Ascending aorta (tissue), 2 donors: ENCODE measurements at regions of chr11 and their contacts with region 1.

Region 1: GRCh38 chr11:76235233-76236091 is 29.2 kb upstream of the WNT11 start:
- DNase-seq: peak; percentile 66 to 95
- H3K4me3 ChIP-seq: peak overlapping the region; percentile 70 to 89
- H3K27ac ChIP-seq: peak overlapping the region; percentile 90
- H3K4me1 ChIP-seq: peaks cover 0 to 6% of the 10 kb centered on the region in 2 donors
- H3K27me3 ChIP-seq: no peaks in the 10 kb centered on the region
- CTCF ChIP-seq: no peak

Region 2: DNA sequence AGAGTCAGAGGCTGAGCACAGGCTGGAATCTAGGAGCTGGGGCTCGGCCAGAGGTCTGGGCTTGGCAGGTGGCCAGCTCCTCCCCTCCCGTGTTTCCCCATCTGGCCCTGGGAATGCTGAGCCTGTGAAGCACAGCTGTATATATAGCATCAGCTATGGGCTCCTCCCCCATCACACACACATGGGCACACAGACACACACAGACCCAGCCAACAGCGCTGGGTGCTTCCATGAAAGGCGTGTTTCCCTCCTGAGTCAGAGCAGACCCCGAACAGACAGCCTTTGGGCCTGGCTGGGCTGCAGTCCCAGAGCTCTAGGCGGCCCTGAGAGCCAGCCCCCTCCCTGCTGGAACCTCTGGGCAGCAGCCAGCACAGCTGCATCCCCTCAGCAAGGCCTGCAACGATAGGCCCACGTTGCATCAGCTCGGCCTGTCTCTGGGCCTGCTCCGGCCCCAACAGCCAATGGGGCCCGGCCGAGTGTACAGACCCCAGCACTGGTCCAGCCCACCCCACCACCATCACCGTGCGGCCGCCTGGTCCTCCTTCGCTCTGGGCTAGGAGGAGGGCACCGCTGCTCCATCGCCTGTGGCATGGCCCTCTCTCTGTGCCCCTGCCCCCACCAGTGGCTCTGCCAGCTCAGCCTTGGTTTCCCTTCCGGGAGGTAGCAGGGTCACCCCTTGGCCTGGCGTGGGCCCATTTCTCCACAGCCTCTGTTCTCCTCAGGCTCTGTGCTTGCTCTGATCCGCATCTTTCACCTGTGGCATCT is 681.0 kb before region 1 on chr11:
- intact Hi-C with region 1: loop called (anchors 10 kb)
- DNase-seq: peak; percentile 93 to 98
- H3K4me3 ChIP-seq: peak overlapping the region; percentile 35
- H3K27ac ChIP-seq: peak overlapping the region; percentile 95 to 97
- H3K4me1 ChIP-seq: peaks cover 21 to 40% of the 10 kb centered on the region in 2 donors
- H3K27me3 ChIP-seq: no peaks in the 10 kb centered on the region
- CTCF ChIP-seq: no peak

Region 3: GRCh38 chr11:76161261-76161961 is 74.1 kb before region 1 on chr11:
- intact Hi-C with region 1: no loop called
- DNase-seq: no peak
- H3K4me3 ChIP-seq: peak overlapping the region in 1 of 2 donors; percentile 36
- H3K27ac ChIP-seq: no peak overlapping the region
- H3K4me1 ChIP-seq: peaks cover 3 to 4% of the 10 kb centered on the region in 2 donors
- H3K27me3 ChIP-seq: no peaks in the 10 kb centered on the region
- CTCF ChIP-seq: no peak

Region 4: DNA sequence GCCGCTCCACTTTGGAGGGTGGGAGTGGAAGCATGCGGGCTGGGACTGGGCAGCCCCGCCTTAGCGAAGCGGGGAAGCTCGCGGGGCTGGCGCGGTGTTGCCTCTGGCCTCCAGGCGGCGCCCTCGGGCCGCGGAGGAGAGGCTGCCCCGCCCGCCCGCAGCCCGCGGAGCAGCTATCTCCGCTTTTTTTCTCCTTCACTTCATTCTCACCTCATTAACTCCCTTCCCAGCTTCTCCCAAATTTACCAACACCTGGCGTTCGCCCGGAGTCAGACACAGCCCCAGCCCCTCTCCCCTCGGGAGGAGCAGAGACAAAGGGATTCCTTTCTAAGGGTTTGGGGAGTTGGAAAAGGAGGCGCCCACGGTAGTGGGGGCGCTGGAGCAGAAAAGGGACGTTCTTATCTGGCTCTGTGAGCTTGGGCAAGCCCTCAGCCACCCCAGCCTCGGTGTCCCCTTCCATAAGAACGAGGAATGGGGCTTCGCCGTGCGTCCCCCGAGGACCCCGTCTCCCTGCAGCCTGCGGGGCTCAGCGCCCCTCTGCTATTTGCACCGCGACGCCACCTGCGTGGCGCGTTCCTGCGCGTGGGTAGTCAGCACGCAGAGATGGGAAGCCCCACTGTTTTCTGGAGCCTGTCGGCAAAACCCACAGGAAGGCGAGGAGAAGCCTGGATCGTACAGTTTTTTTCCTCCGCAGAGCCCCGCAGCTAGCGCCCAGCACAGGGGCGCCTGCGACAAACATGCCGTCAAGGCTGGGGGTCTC is 27.6 kb before region 1 on chr11:
- intact Hi-C with region 1: loop called (anchors 1 kb)
- DNase-seq: peak in 1 of 2 donors; percentile 85
- H3K4me3 ChIP-seq: peak overlapping the region; percentile 70 to 76
- H3K27ac ChIP-seq: no peak overlapping the region
- H3K4me1 ChIP-seq: peaks cover 17 to 36% of the 10 kb centered on the region in 2 donors
- H3K27me3 ChIP-seq: peaks cover 3% of the 10 kb centered on the region
- CTCF ChIP-seq: peak; percentile 93 to 98 (median 94)

Region 5: GRCh38 chr11:76444384-76445123 is 209.1 kb after region 1 on chr11 and contains the start of gene EMSY:
- intact Hi-C with region 1: loop called (anchors 1 kb)
- DNase-seq: peak; percentile 89 to 99
- H3K4me3 ChIP-seq: peak within 1 kb of the TSS; percentile 87 to 90
- H3K27ac ChIP-seq: peak within 1 kb of the TSS; percentile 90 to 93
- H3K4me1 ChIP-seq: peaks cover 8 to 15% of the 10 kb centered on the region in 2 donors
- H3K27me3 ChIP-seq: no peaks in the 10 kb centered on the region
- CTCF ChIP-seq: no peak
- total RNA-seq, gene EMSY: 7.5 TPM

Region 6: GRCh38 chr11:76670485-76671236 is 435.2 kb after region 1 on chr11 and contains the start of gene LRRC32:
- intact Hi-C with region 1: loop called (anchors 5 kb)
- DNase-seq: peak in 1 of 2 donors; percentile 79
- H3K4me3 ChIP-seq: peak within 1 kb of the TSS; percentile 86 to 95
- H3K27ac ChIP-seq: peak within 1 kb of the TSS; percentile 83 to 91
- H3K4me1 ChIP-seq: peaks cover 18 to 33% of the 10 kb centered on the region in 2 donors
- H3K27me3 ChIP-seq: no peaks in the 10 kb centered on the region
- CTCF ChIP-seq: peak in 1 of 3 experiments; percentile 15
- total RNA-seq, gene LRRC32: 280 TPM

Region 7: DNA sequence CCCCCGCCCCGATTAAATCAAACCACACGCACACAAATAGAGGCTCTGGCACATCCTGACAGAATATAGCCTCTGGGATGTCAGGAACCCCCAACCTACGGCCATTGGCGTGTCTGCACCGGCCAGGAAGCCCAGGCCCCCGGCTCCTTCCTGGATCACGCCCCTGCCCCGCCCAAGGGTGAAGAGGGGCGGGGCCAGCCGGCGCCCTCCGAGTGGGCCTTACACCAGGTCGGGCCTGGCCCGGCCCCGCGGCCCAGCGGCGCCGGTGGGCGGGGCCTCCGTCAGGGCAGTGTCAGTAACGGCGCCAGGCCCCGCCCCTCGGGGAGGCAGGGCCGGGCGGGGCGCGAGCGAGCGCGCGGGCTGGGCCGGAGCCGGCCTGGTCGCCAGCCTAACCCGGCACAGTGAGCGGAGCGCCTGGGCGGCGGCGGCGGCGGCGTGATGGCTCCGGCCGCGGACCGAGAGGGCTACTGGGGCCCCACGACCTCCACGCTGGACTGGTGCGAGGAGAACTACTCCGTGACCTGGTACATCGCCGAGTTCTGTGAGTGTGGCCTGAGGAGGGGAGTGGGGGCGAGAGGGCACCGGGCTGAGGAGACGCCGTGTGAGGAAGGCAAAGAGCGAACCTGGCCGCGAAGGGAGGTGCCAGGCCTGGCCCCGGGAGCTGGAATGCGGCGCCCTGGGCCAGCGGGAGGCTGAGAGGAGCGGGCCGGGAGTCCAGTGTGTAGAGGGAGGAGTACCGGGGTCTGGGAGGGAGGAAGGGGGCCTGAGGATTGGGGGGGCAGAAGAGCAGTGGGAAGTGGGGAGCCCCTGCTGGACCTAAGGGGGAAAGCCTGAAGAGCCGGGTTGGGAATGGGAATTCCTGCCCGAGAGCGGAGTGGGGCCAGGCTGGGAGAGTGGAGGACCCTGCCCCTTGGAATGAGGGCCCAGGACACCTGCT is 625.3 kb after region 1 on chr11 and contains the start of gene ACER3:
- intact Hi-C with region 1: loop called (anchors 10 kb)
- DNase-seq: peak; percentile 77 to 95
- H3K4me3 ChIP-seq: peak within 1 kb of the TSS; percentile 69 to 96
- H3K27ac ChIP-seq: peak within 1 kb of the TSS; percentile 87 to 88
- H3K4me1 ChIP-seq: peaks cover 0 to 12% of the 10 kb centered on the region in 2 donors
- H3K27me3 ChIP-seq: no peaks in the 10 kb centered on the region
- CTCF ChIP-seq: peak in 2 of 3 experiments; percentile 15 to 31
- total RNA-seq, gene ACER3: 10.5 TPM